Pancreas (tissue), 10 donors: ENCODE measurements at regions of chr1 and their contacts with region 1.

Region 1: DNA sequence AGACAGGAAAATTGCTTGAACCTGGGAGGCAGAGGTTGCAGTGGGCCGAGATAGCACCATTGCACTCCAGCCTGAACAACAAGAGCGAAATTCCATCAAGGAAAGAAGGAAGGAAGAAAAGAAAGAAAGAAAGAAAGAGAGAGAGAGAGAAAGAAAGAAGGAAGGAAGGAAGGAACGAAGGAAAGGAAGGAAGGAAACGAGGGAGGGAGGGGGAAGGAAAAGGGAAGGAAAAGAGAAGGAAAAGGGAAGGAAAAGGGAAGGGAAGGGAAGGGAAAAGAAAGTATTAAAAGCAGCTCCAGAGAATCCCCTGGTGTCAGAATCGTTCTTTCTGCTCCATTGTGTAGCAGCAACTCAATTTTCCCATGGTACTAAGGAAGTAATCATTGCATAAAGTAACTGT is 19.2 kb upstream of the ZSWIM5 start:
- DNase-seq: no peak
- ATAC-seq: no peak
- H3K4me3 ChIP-seq: no peak overlapping the region
- H3K27ac ChIP-seq: no peak overlapping the region
- H3K4me1 ChIP-seq: no peaks in the 10 kb centered on the region
- H3K27me3 ChIP-seq: peaks cover 0 to 7% (median 0%) of the 10 kb centered on the region in 4 donors
- CTCF ChIP-seq: no peak

Region 2: DNA sequence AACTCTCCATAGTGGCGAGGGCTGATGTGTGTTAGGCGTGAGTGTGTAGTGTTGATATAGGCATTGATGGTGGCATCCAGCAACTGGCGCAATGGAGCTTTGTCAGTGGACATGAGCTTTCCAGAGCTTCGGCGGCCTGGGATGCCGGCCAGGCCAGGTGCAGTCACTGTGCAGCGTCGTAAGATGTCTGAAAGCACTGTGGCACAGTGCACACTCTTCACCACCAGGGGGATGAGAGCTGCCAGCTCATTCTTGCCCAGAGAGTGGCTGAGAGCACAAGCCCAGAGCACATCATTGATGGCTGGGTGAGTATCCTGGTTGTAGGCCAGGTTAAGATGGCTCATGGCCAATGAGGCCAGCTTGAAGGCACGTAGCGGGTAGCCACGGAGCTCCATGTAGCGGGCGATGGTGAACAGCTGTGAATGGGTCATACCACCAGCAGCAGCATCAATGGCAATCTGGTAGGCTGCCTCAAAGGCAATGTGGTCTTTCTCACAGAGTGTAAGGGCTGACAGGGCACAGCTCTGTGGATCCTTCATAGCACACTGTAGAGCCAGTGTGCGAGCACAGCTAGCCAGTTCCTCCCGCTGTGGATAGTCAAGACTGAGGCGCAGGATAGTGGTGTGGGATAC is 206.9 kb before region 1 on chr1:
- intact Hi-C with region 1: loop called in 1 of 3 experiments (anchors 5 kb)
- DNase-seq: peak; percentile 60 to 90 (median 81)
- ATAC-seq: peak; percentile 87 to 97 (median 96)
- H3K4me3 ChIP-seq: no peak overlapping the region
- H3K27ac ChIP-seq: no peak overlapping the region
- H3K4me1 ChIP-seq: no peaks in the 10 kb centered on the region
- H3K27me3 ChIP-seq: no peaks in the 10 kb centered on the region
- CTCF ChIP-seq: peak; percentile 42 to 84 (median 81)

Region 3: GRCh38 chr1:45643978-45644377 is 418.4 kb after region 1 on chr1:
- intact Hi-C with region 1: no loop called
- DNase-seq: no peak
- ATAC-seq: peak; percentile 80 to 94 (median 90)
- H3K4me3 ChIP-seq: no peak overlapping the region
- H3K27ac ChIP-seq: peak overlapping the region; percentile 49 to 74 (median 54)
- H3K4me1 ChIP-seq: peaks cover 3 to 12% (median 12%) of the 10 kb centered on the region in 3 donors
- H3K27me3 ChIP-seq: no peaks in the 10 kb centered on the region
- CTCF ChIP-seq: no peak